ENCODE measurements at regions of chr11 and their contacts with region 1.

Region 1: DNA sequence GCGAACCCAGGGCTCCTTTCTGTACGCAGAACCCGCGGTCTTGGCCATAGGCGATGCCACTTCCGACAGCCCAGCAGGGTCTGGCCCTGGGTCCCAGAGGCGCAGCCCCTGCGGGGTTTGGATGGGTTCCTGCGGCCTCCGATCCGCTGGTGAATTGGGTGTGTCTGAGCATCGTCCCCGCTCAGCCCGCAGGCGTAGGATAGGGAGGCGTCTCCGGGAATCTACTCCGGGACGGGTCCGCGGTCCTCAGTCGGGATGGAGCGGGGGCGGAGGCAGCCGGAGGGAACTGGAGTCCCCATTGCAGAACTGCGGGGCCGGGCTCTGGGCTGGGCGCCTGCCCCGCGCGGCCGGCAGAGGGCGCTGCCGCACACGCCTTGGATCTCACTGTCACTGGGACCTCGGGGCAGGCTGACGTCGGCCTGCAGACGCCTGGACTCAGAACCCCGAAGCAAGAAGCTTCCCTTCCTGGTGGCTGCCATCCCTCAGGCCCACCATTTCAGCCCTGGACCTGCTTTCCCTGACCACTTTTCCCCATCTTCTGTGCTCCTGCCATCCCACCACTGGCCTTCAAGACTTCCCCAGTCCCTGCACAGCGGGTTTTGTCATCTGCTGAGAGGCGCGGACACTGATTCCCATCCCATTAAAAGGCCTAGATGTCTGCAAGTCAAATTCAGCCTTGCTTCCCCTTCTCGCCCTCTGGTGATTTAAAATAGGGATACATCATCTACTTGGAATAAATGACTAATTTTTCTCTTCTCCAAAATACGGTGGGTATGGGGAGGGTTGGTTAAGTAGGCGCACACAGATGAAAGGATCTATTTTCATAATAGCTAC is 38.3 kb upstream of the CREB3L1 start:
- DNase-seq: peak; percentile 58 to 90 (median 77)
- ATAC-seq: peak; percentile 73
- H3K4me3 ChIP-seq: peak overlapping the region; percentile 36 to 43
- H3K4me3 Mint-ChIP-seq: peak overlapping the region; percentile 66
- H3K27ac ChIP-seq: no peak overlapping the region
- H3K27ac Mint-ChIP-seq: no peak overlapping the region
- H3K4me1 ChIP-seq: peaks cover 28% of the 10 kb centered on the region
- H3K4me1 Mint-ChIP-seq: peaks cover 32% of the 10 kb centered on the region
- H3K27me3 ChIP-seq: peaks cover 11 to 19% of the 10 kb centered on the region in 2 experiments
- H3K27me3 Mint-ChIP-seq: peaks cover 33% of the 10 kb centered on the region
- CTCF ChIP-seq: peak; percentile 95

Region 2: DNA sequence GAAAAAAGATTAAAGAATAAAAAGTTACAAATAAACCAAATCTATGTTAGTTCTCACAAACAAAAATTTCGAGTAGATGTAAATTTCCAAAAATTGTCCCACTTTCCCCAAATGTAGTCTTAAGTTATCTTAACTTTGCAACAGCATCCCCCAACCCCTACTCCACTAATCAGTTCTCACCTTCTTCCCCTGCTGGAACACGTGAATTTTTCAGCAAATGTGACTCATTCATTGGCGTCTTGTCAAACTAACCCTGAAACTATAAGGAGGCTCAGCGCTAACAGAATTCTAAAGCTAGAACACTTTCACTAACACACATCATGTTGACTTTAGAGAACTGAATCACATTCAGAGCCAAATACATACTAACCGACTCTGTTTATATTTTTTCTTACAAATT is 164.0 kb before region 1 on chr11:
- CTCF ChIA-PET with region 1: no interaction called
- POLR2A ChIA-PET with region 1: no interaction called
- intact Hi-C with region 1: no loop called
- DNase-seq: no peak
- ATAC-seq: no peak
- H3K4me3 ChIP-seq: no peak overlapping the region
- H3K4me3 Mint-ChIP-seq: no peak overlapping the region
- H3K27ac ChIP-seq: no peak overlapping the region
- H3K27ac Mint-ChIP-seq: no peak overlapping the region
- H3K4me1 ChIP-seq: no peaks in the 10 kb centered on the region
- H3K4me1 Mint-ChIP-seq: peaks cover 4% of the 10 kb centered on the region
- H3K27me3 ChIP-seq: no peaks in the 10 kb centered on the region
- H3K27me3 Mint-ChIP-seq: no peaks in the 10 kb centered on the region
- CTCF ChIP-seq: no peak

Region 3: DNA sequence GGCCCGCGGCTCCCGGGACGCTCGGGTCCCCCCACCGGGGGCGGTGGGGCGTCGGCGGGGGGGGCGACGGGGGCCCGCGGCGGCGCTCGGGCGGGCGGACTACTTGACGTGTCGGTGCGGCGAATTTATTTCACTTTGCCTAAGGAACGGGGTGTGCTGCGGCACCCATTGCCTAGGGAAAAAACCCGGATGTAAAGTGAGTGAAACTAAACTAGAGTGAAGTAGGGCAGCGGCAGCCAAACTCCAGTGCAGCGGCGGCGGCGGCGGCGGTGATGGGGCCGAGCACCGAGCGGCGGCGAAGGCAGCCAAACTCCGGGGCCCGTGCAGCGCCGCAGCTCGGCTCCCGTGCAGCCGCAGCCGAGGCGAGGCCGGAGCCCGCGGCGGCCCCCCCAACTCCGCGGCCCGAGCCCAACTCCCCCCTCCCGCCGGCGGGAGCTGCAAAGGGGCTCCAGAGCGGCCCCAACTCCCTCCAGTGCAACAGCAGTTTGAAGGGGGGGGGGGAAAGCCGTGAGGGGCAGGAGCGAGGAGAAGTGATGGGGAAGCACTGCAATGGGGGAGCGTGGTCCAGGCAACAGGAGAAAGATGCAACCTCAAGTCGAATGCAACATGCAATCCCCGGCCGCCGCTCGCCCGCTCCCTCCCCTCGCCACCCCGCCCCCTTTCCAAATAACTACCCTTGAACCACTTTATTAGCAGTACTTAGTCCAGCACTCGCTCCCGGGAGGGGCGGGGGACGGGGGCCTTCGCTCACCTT is 117.3 kb before region 1 on chr11:
- CTCF ChIA-PET with region 1: interaction called, 3 read pairs
- POLR2A ChIA-PET with region 1: interaction called, 4 read pairs
- intact Hi-C with region 1: loop called (anchors 5 kb)
- DNase-seq: peak; percentile 50 to 92 (median 73)
- ATAC-seq: peak; percentile 54
- H3K4me3 ChIP-seq: peak overlapping the region; percentile 58 to 63
- H3K4me3 Mint-ChIP-seq: peak overlapping the region; percentile 88
- H3K27ac ChIP-seq: peak overlapping the region; percentile 1 to 26
- H3K27ac Mint-ChIP-seq: peak overlapping the region; percentile 96
- H3K4me1 ChIP-seq: peaks cover 30% of the 10 kb centered on the region
- H3K4me1 Mint-ChIP-seq: peaks cover 33% of the 10 kb centered on the region
- H3K27me3 ChIP-seq: no peaks in the 10 kb centered on the region
- H3K27me3 Mint-ChIP-seq: no peaks in the 10 kb centered on the region
- CTCF ChIP-seq: no peak

Region 4: DNA sequence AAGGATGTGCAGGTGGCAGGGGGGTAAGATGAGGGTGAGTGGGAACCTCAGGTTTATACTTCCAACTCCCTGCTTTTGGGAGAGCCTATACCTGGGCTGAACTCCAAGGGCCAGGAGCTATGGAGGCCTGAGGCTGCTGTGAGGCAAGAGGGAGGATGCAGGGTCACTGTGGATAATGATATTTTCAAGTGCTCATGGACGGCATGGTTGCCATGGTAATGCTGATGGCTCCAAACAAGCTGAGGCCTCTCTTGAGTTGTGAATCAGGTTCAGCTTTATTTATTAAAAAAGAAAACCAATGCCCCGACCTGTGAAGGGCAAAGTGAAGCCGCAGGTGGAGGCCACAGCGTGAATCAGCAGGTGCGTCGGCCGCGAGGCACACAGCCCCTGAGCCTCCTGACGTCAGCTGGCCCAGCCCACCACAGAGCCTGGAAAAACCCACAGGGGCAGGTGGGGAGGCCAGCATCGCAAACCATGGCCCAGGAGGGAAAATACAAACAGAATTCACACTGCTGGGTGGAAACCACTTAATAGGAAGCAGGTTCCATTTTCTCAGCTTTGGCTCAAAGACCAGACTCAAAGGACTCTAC is 20.9 kb after region 1 on chr11:
- CTCF ChIA-PET with region 1: interaction called, 10 read pairs
- POLR2A ChIA-PET with region 1: interaction called, 3 read pairs
- intact Hi-C with region 1: no loop called
- DNase-seq: peak in 1 of 9 experiments; percentile 15
- ATAC-seq: no peak
- H3K4me3 ChIP-seq: no peak overlapping the region
- H3K4me3 Mint-ChIP-seq: no peak overlapping the region
- H3K27ac ChIP-seq: no peak overlapping the region
- H3K27ac Mint-ChIP-seq: no peak overlapping the region
- H3K4me1 ChIP-seq: no peaks in the 10 kb centered on the region
- H3K4me1 Mint-ChIP-seq: no peaks in the 10 kb centered on the region
- H3K27me3 ChIP-seq: no peaks in the 10 kb centered on the region
- H3K27me3 Mint-ChIP-seq: peaks cover 2% of the 10 kb centered on the region
- CTCF ChIP-seq: no peak

Region 5: GRCh38 chr11:46332568-46333393 is 93.6 kb after region 1 on chr11:
- CTCF ChIA-PET with region 1: interaction called, 19 read pairs
- POLR2A ChIA-PET with region 1: interaction called, 7 read pairs
- intact Hi-C with region 1: no loop called
- DNase-seq: peak in 7 of 9 experiments; percentile 36 to 71 (median 58)
- ATAC-seq: peak; percentile 32
- H3K4me3 ChIP-seq: peak overlapping the region; percentile 43 to 54
- H3K4me3 Mint-ChIP-seq: peak overlapping the region; percentile 86
- H3K27ac ChIP-seq: peak overlapping the region in 1 of 2 experiments; percentile 6
- H3K27ac Mint-ChIP-seq: peak overlapping the region; percentile 95
- H3K4me1 ChIP-seq: peaks cover 62% of the 10 kb centered on the region
- H3K4me1 Mint-ChIP-seq: peaks cover 61% of the 10 kb centered on the region
- H3K27me3 ChIP-seq: peaks cover 0 to 12% of the 10 kb centered on the region in 2 experiments
- H3K27me3 Mint-ChIP-seq: no peaks in the 10 kb centered on the region
- CTCF ChIP-seq: no peak

Region 6: DNA sequence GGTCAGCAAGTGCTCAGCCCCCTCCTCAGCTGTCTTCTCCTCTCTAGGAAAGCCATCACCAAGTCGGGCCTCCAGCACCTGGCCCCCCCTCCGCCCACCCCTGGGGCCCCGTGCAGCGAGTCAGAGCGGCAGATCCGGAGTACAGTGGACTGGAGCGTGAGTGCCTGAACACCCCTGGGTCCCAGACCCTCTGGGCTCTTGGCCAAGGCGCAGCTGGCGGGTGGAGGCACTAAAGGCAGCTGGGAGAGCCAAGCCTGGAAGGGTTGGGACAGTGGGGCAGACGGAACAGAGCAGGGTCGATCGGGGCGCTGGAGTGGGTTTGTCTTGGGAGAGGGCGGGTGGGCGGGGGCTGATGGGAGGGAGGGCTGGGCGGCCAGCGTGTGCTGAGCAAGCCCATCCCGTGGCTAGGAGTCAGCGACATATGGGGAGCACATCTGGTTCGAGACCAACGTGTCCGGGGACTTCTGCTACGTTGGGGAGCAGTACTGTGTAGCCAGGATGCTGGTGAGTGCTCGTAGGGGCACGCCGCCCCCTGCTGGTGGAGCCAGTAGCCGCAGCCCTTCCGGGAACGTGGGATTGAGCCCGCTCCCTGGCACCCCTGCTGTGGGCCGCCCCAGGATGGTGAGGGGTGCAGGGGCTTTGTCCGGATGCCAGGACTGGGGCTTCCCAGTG is 128.2 kb after region 1 on chr11:
- CTCF ChIA-PET with region 1: interaction called, 41 read pairs
- POLR2A ChIA-PET with region 1: no interaction called
- intact Hi-C with region 1: loop called (anchors 1 kb)
- DNase-seq: peak; percentile 54 to 90 (median 81)
- ATAC-seq: peak; percentile 96
- H3K4me3 ChIP-seq: no peak overlapping the region
- H3K4me3 Mint-ChIP-seq: no peak overlapping the region
- H3K27ac ChIP-seq: no peak overlapping the region
- H3K27ac Mint-ChIP-seq: no peak overlapping the region
- H3K4me1 ChIP-seq: peaks cover 50% of the 10 kb centered on the region
- H3K4me1 Mint-ChIP-seq: peaks cover 43% of the 10 kb centered on the region
- H3K27me3 ChIP-seq: no peaks in the 10 kb centered on the region
- H3K27me3 Mint-ChIP-seq: no peaks in the 10 kb centered on the region
- CTCF ChIP-seq: peak; percentile 72

Region 7: DNA sequence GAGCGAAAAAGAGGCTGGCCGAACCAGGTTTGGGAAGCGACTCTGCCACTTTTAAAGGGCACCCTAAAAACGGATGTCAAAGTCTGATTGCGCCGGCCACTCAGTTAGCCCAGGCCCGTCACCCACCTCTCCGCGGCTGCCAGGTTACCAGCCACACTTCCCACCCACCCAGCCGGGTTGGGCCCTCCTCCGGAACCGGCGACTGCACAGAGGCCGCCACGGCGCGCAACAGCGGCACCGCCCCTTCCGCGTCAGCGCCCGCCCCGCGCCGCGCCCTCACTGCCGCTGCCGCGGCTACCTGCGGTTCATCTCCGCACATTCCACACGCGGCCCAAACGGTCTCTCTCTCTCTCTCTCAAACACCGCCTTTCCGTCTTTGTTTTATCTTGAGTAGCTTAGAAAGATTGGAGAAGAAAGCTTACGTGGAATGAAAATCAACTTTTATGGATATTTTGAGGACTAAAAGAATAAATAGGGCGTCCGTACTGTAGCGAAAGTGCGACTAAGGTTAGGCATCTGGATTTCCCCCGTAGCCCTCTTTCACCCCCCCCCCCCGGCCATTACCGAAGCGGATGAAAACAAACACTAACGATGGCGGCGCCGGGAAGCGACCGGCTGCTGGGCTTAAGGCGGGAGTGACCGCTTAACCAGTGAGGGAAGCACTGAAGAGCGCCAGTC is 378.0 kb after region 1 on chr11 and contains the starts of genes ATG13 and HARBI1:
- CTCF ChIA-PET with region 1: interaction called, 4 read pairs
- POLR2A ChIA-PET with region 1: no interaction called
- intact Hi-C with region 1: loop called in 1 of 2 experiments (anchors 2 kb)
- DNase-seq: peak; percentile 81 to 96 (median 92)
- ATAC-seq: peak; percentile 91
- H3K4me3 ChIP-seq: peak within 1 kb of the TSS; percentile 84 to 95
- H3K4me3 Mint-ChIP-seq: peak within 1 kb of the TSS; percentile 95
- H3K27ac ChIP-seq: peak within 1 kb of the TSS; percentile 96 to 98
- H3K27ac Mint-ChIP-seq: peak within 1 kb of the TSS; percentile 98
- H3K4me1 ChIP-seq: peaks cover 19% of the 10 kb centered on the region
- H3K4me1 Mint-ChIP-seq: peaks cover 42% of the 10 kb centered on the region
- H3K27me3 ChIP-seq: no peaks in the 10 kb centered on the region
- H3K27me3 Mint-ChIP-seq: no peaks in the 10 kb centered on the region
- CTCF ChIP-seq: no peak
- total RNA-seq, gene ATG13: 117 to 137 TPM
- total RNA-seq, gene HARBI1: 18.1 to 19.1 TPM